ENCODE measurements at regions of chr7 and their contacts with region 1.

Region 1: DNA sequence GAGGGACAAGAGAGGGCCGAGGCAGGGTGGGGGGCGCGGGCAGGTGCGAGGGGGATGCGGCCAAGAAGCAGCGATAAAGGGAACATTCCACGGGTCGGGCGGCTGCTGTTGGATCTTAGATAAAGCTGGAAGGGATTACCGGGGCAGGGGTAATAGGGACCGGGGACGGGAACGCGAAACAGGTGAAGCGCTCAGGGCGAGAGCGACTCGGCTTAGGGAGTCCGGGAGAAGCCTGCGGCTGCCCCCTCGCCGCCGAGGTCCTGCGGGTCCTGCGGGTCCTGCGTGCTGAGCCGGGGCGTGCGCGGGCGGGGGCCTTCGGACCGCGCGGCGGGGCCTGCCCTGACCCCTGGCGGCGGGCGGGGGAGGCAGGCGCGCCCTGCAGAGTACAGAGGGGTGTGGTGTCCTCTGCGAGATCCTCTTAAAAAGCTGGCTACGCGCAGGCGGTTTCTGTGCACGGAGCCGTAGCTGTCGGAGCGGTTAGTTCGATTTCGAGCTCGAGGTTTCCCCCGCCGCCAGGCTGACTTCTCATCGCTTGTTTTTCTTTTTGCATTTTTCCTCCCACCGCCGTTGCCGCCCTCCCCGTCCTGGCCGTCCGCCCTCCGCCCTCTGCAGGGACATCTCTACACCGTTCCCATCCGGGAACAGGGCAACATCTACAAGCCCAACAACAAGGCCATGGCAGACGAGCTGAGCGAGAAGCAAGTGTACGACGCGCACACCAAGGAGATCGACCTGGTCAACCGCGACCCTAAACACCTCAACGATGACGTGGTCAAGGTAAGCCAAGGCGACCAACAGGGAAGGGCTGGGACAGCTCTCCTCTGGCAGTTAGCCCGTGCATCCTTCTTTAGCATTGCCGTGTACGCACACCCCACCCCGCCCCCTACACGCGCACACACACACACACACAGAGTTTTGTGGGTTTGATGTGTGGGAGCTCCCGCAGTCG is 1.4 kb downstream of the CAV1 start:
- DNase-seq: peak; percentile 92
- H3K4me3 ChIP-seq: peak overlapping the region; percentile 65 to 91 (median 81)
- H3K27ac ChIP-seq: peak overlapping the region; percentile 91 to 99 (median 96)
- H3K4me1 ChIP-seq: peaks cover 33 to 70% (median 66%) of the 10 kb centered on the region in 4 donors
- H3K27me3 ChIP-seq: no peaks in the 10 kb centered on the region
- CTCF ChIP-seq: peak; percentile 87 to 93 (median 91)
- EP300 ChIP-seq: no peak
- POLR2A ChIP-seq: peak; percentile 48

Region 2: DNA sequence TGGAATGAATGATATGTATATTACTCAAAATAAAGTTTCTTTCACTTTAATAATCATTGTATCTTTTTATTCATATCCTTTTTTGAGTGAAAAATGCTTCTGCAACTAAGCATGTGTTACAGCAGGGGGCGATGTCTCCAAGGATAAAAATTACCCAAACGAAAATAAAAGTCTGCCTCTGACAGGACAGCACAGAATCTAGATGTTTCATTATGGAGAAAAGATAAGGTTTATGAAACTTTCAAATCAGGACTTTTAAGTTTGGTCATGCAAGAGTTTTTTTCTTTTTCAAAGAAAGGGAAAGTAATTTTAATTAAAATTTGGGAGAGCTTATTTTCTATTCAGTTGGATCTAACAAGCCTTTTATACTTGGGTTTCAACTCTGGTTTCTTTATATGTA is 267.5 kb before region 1 on chr7:
- intact Hi-C with region 1: loop called (anchors 2 kb)
- DNase-seq: no peak
- H3K4me3 ChIP-seq: no peak overlapping the region
- H3K27ac ChIP-seq: peak overlapping the region; percentile 25 to 56 (median 46)
- H3K4me1 ChIP-seq: peaks cover 5 to 15% (median 10%) of the 10 kb centered on the region in 4 donors
- H3K27me3 ChIP-seq: no peaks in the 10 kb centered on the region
- CTCF ChIP-seq: peak; percentile 81 to 90 (median 84)
- EP300 ChIP-seq: no peak
- POLR2A ChIP-seq: no peak

Region 3: GRCh38 chr7:116354546-116355408 is 171.4 kb before region 1 on chr7:
- intact Hi-C with region 1: loop called (anchors 10 kb)
- DNase-seq: no peak
- H3K4me3 ChIP-seq: peak overlapping the region; percentile 6 to 44 (median 28)
- H3K27ac ChIP-seq: peak overlapping the region; percentile 77 to 87 (median 84)
- H3K4me1 ChIP-seq: peaks cover 54 to 61% (median 56%) of the 10 kb centered on the region in 4 donors
- H3K27me3 ChIP-seq: no peaks in the 10 kb centered on the region
- CTCF ChIP-seq: no peak
- EP300 ChIP-seq: no peak
- POLR2A ChIP-seq: no peak

Region 4: DNA sequence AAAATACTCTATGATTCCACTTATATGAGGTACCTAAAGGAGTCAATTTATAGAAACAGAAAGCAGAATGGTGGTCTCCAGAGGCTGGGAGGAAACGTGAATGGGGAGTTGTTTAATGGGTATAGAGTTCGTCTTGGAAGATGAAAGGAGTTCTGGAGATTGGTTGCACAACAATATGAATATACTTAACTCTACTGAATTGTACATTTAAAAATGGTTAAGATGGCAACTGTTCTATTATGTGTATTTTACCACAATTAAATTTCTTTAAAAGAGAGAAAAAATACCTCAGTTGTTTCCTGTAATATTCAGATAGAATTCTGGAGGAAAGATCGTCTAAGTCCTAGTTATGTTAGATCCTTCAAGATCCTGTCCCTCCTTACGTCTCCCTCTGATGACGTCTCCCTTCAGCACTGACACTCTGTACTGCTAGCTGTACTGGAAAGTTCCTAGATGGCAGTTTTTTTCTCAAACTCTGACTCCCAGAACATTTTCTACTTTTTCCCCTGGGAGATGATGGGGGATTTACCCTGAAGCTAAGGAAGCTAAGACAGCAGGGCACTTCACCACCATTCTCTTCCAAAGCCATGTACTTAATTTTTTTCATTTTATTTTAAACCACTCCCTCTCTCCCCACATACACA is 79.9 kb before region 1 on chr7:
- intact Hi-C with region 1: loop called (anchors 5 kb)
- DNase-seq: no peak
- H3K4me3 ChIP-seq: no peak overlapping the region
- H3K27ac ChIP-seq: peak overlapping the region; percentile 0 to 75 (median 57)
- H3K4me1 ChIP-seq: peaks cover 18 to 69% (median 50%) of the 10 kb centered on the region in 4 donors
- H3K27me3 ChIP-seq: no peaks in the 10 kb centered on the region
- CTCF ChIP-seq: no peak
- EP300 ChIP-seq: no peak
- POLR2A ChIP-seq: no peak

Region 5: GRCh38 chr7:116776610-116777289 is 250.6 kb after region 1 on chr7:
- intact Hi-C with region 1: no loop called
- DNase-seq: no peak
- H3K4me3 ChIP-seq: no peak overlapping the region
- H3K27ac ChIP-seq: no peak overlapping the region
- H3K4me1 ChIP-seq: peaks cover 12 to 15% (median 12%) of the 10 kb centered on the region in 4 donors
- H3K27me3 ChIP-seq: no peaks in the 10 kb centered on the region
- CTCF ChIP-seq: no peak
- EP300 ChIP-seq: no peak
- POLR2A ChIP-seq: no peak

Measured in esophagus muscularis mucosa (tissue), 4 donors.